WTC11 (cell line): ENCODE measurements at regions of chr20 and their contacts with region 1.

Region 1: GRCh38 chr20:21235484-21236445 is 67.4 kb upstream of the XRN2 start:
- DNase-seq: peak; percentile 76
- ATAC-seq: peak; percentile 82
- H3K4me3 Mint-ChIP-seq: peak overlapping the region; percentile 54
- H3K27ac Mint-ChIP-seq: no peak overlapping the region; the same call in 1 of the 2 replicates
- H3K4me1 Mint-ChIP-seq: peaks cover 33% of the 10 kb centered on the region
- H3K27me3 Mint-ChIP-seq: no peaks in the 10 kb centered on the region
- CTCF ChIP-seq: peak; percentile 93

Region 2: GRCh38 chr20:20860078-20860806 is 375.5 kb before region 1 on chr20:
- CTCF ChIA-PET with region 1: interaction called, 15 read pairs
- POLR2A ChIA-PET with region 1: no interaction called
- DNase-seq: peak; percentile 99
- ATAC-seq: peak; percentile 81
- H3K4me3 Mint-ChIP-seq: no peak overlapping the region
- H3K27ac Mint-ChIP-seq: no peak overlapping the region
- H3K4me1 Mint-ChIP-seq: no peaks in the 10 kb centered on the region; the same call in 1 of the 2 replicates
- H3K27me3 Mint-ChIP-seq: peaks cover 4% of the 10 kb centered on the region
- CTCF ChIP-seq: peak; percentile 80

Region 3: DNA sequence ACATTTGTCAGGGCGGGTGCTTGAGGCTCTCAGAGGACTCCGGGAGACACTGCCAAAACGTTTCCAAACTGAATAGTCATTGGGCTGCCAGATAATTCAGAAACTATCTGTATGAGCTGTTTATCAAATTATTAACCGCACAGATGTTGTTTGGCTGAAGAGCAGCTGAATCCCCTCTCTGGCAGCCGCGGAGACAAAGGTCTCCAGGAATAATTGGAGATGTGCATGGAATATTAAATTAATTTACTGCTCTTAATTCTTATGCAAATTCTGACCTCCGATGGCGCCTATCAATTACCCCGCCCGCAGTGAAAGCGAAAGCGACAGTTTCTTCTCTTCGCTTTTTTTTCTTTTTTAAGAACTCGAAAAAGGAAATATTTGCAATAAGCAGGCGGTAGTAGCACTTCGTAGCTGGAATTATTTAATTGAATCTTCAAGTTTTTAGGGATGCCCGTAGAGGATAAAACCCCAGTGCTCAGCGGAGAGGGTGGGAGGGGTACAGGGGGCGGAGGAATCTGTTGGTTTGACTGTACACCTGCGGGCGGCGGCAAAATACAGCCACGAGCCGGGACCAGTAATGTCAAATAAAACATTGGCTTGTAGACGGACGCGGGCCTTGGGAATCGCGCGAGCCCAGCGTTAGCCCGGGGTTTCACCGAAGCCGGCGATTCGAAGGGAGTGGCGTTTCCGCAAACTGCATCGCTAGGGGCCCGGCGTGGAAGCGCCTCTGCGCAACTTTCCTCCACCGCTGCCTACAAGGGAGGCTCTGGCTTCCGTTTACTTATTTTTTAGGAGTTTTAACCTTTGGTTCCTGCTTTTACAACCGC is 135.8 kb before region 1 on chr20:
- CTCF ChIA-PET with region 1: interaction called, 16 read pairs
- POLR2A ChIA-PET with region 1: interaction called, 4 read pairs
- DNase-seq: peak; percentile 60
- ATAC-seq: no peak
- H3K4me3 Mint-ChIP-seq: peak overlapping the region; percentile 87
- H3K27ac Mint-ChIP-seq: peak overlapping the region; percentile 95
- H3K4me1 Mint-ChIP-seq: peaks cover 55% of the 10 kb centered on the region
- H3K27me3 Mint-ChIP-seq: peaks cover 85% of the 10 kb centered on the region
- CTCF ChIP-seq: no peak

Region 4: DNA sequence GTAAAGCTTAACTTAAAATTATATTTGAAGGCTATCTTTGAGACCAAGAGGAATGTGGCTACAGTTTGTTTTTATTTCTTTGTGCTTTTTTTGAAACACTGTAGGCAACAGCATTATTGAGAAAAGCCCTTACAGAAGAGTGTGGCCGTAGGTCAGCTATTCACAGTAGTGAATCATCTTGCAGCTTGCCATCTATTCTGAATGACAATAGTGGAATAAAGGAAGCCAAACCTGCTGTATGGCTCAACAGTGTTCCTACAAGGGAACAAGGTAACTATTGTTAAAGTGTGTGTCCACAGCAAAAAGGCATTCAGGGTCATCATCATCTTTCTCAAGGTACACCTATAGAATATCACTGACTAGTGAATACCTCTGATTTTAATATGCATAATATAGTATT is 21.3 kb before region 1 on chr20:
- CTCF ChIA-PET with region 1: interaction called, 11 read pairs
- POLR2A ChIA-PET with region 1: no interaction called
- DNase-seq: no peak
- ATAC-seq: peak; percentile 93
- H3K4me3 Mint-ChIP-seq: no peak overlapping the region
- H3K27ac Mint-ChIP-seq: no peak overlapping the region
- H3K4me1 Mint-ChIP-seq: peaks cover 75% of the 10 kb centered on the region
- H3K27me3 Mint-ChIP-seq: no peaks in the 10 kb centered on the region
- CTCF ChIP-seq: no peak

Region 5: GRCh38 chr20:21259346-21259745 is 23.6 kb after region 1 on chr20:
- CTCF ChIA-PET with region 1: no interaction called
- POLR2A ChIA-PET with region 1: no interaction called
- DNase-seq: no peak
- ATAC-seq: no peak
- H3K4me3 Mint-ChIP-seq: no peak overlapping the region
- H3K27ac Mint-ChIP-seq: no peak overlapping the region
- H3K4me1 Mint-ChIP-seq: no peaks in the 10 kb centered on the region
- H3K27me3 Mint-ChIP-seq: no peaks in the 10 kb centered on the region
- CTCF ChIP-seq: no peak

Region 6: GRCh38 chr20:21340991-21341697 is 105.4 kb after region 1 on chr20:
- CTCF ChIA-PET with region 1: interaction called, 13 read pairs
- POLR2A ChIA-PET with region 1: no interaction called
- DNase-seq: no peak
- ATAC-seq: peak; percentile 78
- H3K4me3 Mint-ChIP-seq: peak overlapping the region; percentile 1; the same call in 1 of the 2 replicates
- H3K27ac Mint-ChIP-seq: peak overlapping the region; percentile 44
- H3K4me1 Mint-ChIP-seq: peaks cover 17% of the 10 kb centered on the region
- H3K27me3 Mint-ChIP-seq: no peaks in the 10 kb centered on the region
- CTCF ChIP-seq: no peak

Region 7: GRCh38 chr20:21490095-21490494 is 254.3 kb after region 1 on chr20:
- CTCF ChIA-PET with region 1: interaction called, 14 read pairs
- POLR2A ChIA-PET with region 1: no interaction called
- DNase-seq: no peak
- ATAC-seq: no peak
- H3K4me3 Mint-ChIP-seq: no peak overlapping the region
- H3K27ac Mint-ChIP-seq: no peak overlapping the region
- H3K4me1 Mint-ChIP-seq: peaks cover 22% of the 10 kb centered on the region
- H3K27me3 Mint-ChIP-seq: no peaks in the 10 kb centered on the region
- CTCF ChIP-seq: no peak

Region 8: GRCh38 chr20:21513881-21514540 is 278.2 kb after region 1 on chr20 and contains the start of gene NKX2-2:
- CTCF ChIA-PET with region 1: interaction called, 10 read pairs
- POLR2A ChIA-PET with region 1: no interaction called
- DNase-seq: peak; percentile 54
- ATAC-seq: no peak
- H3K4me3 Mint-ChIP-seq: peak within 1 kb of the TSS; percentile 68
- H3K27ac Mint-ChIP-seq: no peak within 1 kb of the TSS
- H3K4me1 Mint-ChIP-seq: peaks cover 53% of the 10 kb centered on the region
- H3K27me3 Mint-ChIP-seq: peaks cover 93% of the 10 kb centered on the region
- CTCF ChIP-seq: no peak
- total RNA-seq, gene NKX2-2: not detected in 3 replicates